ENCODE measurements at regions of chr13 and their contacts with region 1.

Region 1: GRCh38 chr13:27424246-27425157 is at the start of gene GTF3A:
- DNase-seq: peak; percentile 89
- H3K4me3 Mint-ChIP-seq: peak within 1 kb of the TSS; percentile 88
- H3K27ac Mint-ChIP-seq: peak within 1 kb of the TSS; percentile 91
- H3K4me1 Mint-ChIP-seq: peaks cover 30% of the 10 kb centered on the region
- H3K27me3 Mint-ChIP-seq: no peaks in the 10 kb centered on the region
- total RNA-seq, gene GTF3A: 303 to 314 TPM

Region 2: GRCh38 chr13:26221721-26222519 is 1202.6 kb before region 1 on chr13 and contains the start of gene RNF6:
- CTCF ChIA-PET with region 1: no interaction called
- intact Hi-C with region 1: loop called (anchors 10 kb)
- DNase-seq: peak; percentile 92
- H3K4me3 Mint-ChIP-seq: peak within 1 kb of the TSS; percentile 91
- H3K27ac Mint-ChIP-seq: peak within 1 kb of the TSS; percentile 100
- H3K4me1 Mint-ChIP-seq: peaks cover 30% of the 10 kb centered on the region
- H3K27me3 Mint-ChIP-seq: peaks cover 2% of the 10 kb centered on the region
- total RNA-seq, gene RNF6: 38.2 to 39.4 TPM

Region 3: GRCh38 chr13:27251166-27252091 is 173.1 kb before region 1 on chr13 and contains the start of gene RPL21:
- CTCF ChIA-PET with region 1: no interaction called
- intact Hi-C with region 1: loop called (anchors 2 kb)
- DNase-seq: peak; percentile 94
- H3K4me3 Mint-ChIP-seq: peak within 1 kb of the TSS; percentile 99
- H3K27ac Mint-ChIP-seq: peak within 1 kb of the TSS; percentile 99
- H3K4me1 Mint-ChIP-seq: peaks cover 43% of the 10 kb centered on the region
- H3K27me3 Mint-ChIP-seq: no peaks in the 10 kb centered on the region
- total RNA-seq, gene RPL21: 1,766 to 1,839 TPM

Region 4: DNA sequence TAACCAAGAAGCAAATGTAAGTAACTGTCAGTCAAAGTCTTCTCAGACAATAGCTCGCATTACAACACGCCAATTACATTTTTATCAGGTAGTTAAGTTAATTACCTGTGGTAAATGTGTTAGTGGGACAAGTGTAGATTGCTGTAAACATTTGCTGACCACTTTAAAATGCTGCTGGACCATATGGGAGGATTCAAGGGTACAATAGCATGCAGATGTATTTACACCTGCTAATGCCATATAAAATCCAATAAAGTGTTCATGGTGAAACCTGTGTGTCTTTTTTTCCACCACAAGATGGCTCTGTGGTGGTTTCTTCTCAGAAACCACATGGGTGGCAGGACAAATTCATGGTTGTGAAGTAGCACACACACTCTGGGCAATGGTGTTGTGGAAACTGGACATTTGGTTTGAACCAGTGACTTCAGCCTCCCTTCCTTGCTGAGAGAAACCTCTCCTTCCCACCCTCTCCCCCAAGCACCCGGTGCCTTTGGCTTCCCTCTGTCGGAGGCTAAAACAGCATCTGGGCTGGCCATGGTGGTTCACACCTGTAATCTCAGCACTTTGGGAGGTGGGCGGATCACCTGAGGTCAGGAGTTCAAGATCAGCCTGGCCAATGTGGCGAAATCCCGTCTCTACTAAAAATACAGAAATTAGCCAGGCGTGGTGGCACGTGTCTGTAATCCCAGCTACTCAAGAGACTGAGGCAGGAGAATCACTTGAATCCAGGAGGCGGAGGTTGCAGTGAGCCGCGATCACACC is 18.1 kb before region 1 on chr13:
- CTCF ChIA-PET with region 1: interaction called, 7 read pairs
- intact Hi-C with region 1: loop called (anchors 1 kb)
- DNase-seq: peak; percentile 27
- H3K4me3 Mint-ChIP-seq: no peak overlapping the region
- H3K27ac Mint-ChIP-seq: no peak overlapping the region
- H3K4me1 Mint-ChIP-seq: no peaks in the 10 kb centered on the region
- H3K27me3 Mint-ChIP-seq: peaks cover 3% of the 10 kb centered on the region

Region 5: DNA sequence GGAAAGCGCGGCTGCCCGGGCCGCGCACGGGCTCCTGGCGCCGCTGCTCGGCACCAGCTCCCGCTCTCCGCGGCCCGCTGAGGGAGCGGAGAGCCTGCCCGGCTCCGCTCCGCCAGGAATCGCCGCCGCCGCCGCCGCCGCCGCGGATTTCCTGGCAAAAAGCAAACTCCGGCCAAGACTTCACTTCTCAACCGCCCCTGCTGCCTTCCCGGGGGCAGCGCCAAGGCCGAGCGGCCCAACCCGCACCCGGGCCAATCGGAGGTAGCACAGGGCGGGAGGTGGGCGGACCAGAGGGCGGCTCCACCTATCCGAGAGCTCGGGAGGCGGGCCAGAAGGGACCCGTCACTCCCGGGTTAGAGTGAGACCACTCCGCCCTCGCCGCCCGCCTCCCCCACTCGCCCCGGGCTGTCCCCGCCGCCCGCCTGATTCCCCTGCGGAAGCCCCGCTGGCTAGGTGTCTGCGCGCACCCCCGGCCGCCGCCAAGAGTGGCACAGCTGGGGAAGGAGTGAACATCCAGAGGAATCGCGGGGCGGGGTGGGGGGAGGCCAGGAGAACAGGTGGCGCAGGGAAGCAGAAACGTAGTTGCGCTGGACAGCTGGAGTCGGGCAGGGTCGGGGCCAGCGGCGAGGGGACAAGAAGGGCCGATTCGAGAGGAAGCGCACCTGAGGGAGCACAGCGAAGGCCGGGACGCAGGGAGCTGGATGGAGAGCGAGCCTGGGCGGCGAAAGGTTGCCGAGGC is 196.0 kb after region 1 on chr13 and contains the start of gene LNX2:
- CTCF ChIA-PET with region 1: no interaction called
- intact Hi-C with region 1: loop called (anchors 1 kb)
- DNase-seq: peak; percentile 97
- H3K4me3 Mint-ChIP-seq: peak within 1 kb of the TSS; percentile 87
- H3K27ac Mint-ChIP-seq: peak within 1 kb of the TSS; percentile 89
- H3K4me1 Mint-ChIP-seq: peaks cover 52% of the 10 kb centered on the region
- H3K27me3 Mint-ChIP-seq: no peaks in the 10 kb centered on the region
- total RNA-seq, gene LNX2: 5.8 to 6.4 TPM

Region 6: DNA sequence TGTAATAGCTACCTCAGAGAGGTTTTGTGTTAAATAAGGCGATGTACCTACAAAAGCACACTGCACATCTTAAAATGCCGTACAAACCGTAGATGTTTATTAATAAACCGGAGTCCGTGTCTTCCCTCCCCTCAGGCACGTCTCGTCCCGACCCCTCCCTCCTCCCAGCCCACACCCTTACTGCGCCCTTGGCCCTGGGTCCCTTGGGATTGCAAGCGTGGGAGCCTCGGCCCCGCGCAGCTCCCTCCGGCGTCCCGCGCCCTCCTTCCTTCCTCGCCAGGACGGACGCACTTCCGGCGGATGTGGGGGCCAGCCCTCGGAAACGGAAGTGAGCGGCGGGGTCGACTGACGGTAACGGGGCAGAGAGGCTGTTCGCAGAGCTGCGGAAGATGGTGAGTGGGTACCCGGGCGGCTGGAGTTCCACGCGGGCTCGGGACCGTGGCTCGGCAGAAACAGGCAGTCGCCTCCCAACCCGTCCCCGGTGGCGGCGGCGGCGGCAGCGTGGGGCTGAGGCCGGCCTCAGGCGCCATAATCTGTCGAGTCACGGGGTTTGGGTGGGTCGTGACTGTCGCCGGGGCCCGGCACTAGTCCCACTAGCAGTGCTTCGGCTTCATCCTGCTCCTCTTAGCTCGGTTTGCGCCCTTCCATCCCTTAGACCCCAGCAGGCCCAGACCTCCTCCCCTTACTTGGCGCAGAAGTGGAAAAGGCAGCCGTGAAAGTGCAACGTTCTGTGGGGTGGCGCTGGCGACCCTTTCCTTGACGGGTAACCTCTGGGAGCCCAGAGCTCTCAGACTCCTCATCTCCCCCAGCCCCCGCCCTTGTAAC is 1234.5 kb after region 1 on chr13 and contains the start of gene POMP:
- CTCF ChIA-PET with region 1: no interaction called
- intact Hi-C with region 1: loop called (anchors 10 kb)
- DNase-seq: peak; percentile 95
- H3K4me3 Mint-ChIP-seq: peak within 1 kb of the TSS; percentile 97
- H3K27ac Mint-ChIP-seq: peak within 1 kb of the TSS; percentile 98
- H3K4me1 Mint-ChIP-seq: peaks cover 56% of the 10 kb centered on the region
- H3K27me3 Mint-ChIP-seq: no peaks in the 10 kb centered on the region
- total RNA-seq, gene POMP: 106 to 108 TPM

Region 7: DNA sequence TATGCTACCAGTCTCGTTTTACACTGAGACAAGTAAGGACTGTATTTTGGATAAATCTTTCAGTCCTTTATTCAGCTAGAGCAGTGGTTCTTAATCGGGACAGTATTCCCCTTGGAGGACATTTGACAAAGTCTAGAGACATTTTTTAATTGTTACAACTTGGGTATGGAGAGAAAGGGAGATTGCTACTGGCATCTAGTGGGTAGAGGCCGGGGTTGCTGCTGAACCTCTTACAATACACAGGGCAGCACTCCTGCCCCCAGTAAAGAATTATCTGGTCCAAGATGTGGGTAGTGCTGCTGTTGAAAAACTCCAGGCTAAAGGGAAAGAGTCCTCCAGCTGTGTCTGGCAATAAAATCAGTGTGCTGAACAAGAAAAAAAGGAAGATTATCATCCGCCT is 1836.2 kb after region 1 on chr13:
- CTCF ChIA-PET with region 1: no interaction called
- intact Hi-C with region 1: no loop called
- DNase-seq: no peak
- H3K4me3 Mint-ChIP-seq: no peak overlapping the region
- H3K27ac Mint-ChIP-seq: no peak overlapping the region
- H3K4me1 Mint-ChIP-seq: no peaks in the 10 kb centered on the region
- H3K27me3 Mint-ChIP-seq: peaks cover 7% of the 10 kb centered on the region

Measured in activated naive CD4-positive, alpha-beta T cell treated with anti-CD3 and anti-CD28 coated beads for 36 hours (primary cell).